ENCODE measurements at regions of chr5 and their contacts with region 1.

Region 1: GRCh38 chr5:96067894-96068614 is 106.4 kb upstream of the ELL2 start:
- DNase-seq: peak; percentile 94
- H3K4me3 ChIP-seq: no peak overlapping the region
- H3K27ac ChIP-seq: peak overlapping the region; percentile 89
- H3K4me1 ChIP-seq: peaks cover 46% of the 10 kb centered on the region
- H3K27me3 ChIP-seq: no peaks in the 10 kb centered on the region
- CTCF ChIP-seq: no peak

Region 2: DNA sequence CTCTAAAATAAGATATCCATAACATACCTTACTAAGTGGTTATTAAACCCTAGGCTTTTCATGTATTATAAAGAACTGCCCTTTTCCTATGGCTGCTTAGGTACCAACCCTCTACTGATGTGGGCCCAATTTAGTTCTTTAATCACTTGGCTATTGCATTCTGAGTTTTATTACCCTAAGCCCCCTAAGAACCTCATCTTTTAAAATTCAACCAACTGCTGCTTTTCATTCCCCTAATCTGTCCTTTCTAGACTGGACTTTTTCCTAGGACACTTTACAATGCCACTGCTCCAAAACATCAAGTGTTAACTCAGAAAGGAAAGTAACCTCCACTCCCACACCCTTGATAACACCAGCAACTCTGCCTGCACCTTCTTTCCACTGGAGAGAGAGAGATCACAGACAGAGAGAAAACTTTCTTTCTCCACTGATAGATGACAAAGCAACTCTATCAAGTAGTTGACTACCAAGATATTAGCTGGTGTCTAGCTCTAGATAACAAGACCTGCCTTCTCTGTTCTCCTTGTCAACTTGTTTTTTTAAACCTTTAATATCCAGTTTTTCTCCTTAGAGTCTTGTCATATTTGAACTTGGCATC is 133.7 kb before region 1 on chr5:
- CTCF ChIA-PET with region 1: no interaction called
- dilution Hi-C with region 1: no loop called
- in situ Hi-C with region 1: no loop called
- intact Hi-C with region 1: no loop called
- DNase-seq: no peak
- H3K4me3 ChIP-seq: no peak overlapping the region
- H3K27ac ChIP-seq: no peak overlapping the region
- H3K4me1 ChIP-seq: peaks cover 7% of the 10 kb centered on the region
- H3K27me3 ChIP-seq: no peaks in the 10 kb centered on the region
- CTCF ChIP-seq: no peak

Region 3: DNA sequence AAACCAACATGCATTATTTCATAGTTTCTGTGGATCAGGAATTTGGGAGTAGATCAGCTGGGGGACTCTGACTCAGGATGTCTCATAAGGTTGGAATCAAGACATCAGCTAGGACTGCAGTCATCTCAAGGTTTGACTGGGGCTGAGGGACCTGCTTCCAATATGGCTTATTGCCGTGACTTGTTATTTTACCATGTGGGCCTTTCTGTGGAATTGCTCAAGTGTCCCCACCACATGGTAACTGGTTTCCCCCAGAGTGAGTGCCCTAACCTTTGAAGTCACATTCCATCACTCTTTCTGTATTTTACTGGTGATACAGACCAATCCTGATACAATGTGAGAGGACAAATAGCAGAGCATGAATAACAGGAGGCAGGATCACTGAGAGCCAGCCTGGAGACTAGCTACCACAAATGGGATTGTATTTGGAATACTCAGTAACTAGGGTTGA is 36.2 kb before region 1 on chr5:
- CTCF ChIA-PET with region 1: no interaction called
- dilution Hi-C with region 1: no loop called
- in situ Hi-C with region 1: no loop called
- intact Hi-C with region 1: loop called (anchors 5 kb)
- DNase-seq: peak; percentile 93
- H3K4me3 ChIP-seq: no peak overlapping the region
- H3K27ac ChIP-seq: peak overlapping the region; percentile 84
- H3K4me1 ChIP-seq: peaks cover 43% of the 10 kb centered on the region
- H3K27me3 ChIP-seq: no peaks in the 10 kb centered on the region
- CTCF ChIP-seq: no peak

Region 4: GRCh38 chr5:96113170-96113939 is 45.3 kb after region 1 on chr5:
- CTCF ChIA-PET with region 1: no interaction called
- dilution Hi-C with region 1: no loop called
- in situ Hi-C with region 1: no loop called
- intact Hi-C with region 1: loop called (anchors 2 kb)
- DNase-seq: peak; percentile 89
- H3K4me3 ChIP-seq: peak overlapping the region in 2 of 3 experiments; percentile 8
- H3K27ac ChIP-seq: peak overlapping the region; percentile 88
- H3K4me1 ChIP-seq: peaks cover 47% of the 10 kb centered on the region
- H3K27me3 ChIP-seq: no peaks in the 10 kb centered on the region
- CTCF ChIP-seq: no peak